ENCODE measurements at regions of chr20 and their contacts with region 1.

Region 1: GRCh38 chr20:36460648-36461599 is 80.4 kb upstream of the MYL9 start:
- DNase-seq: peak; percentile 92 to 96 (median 95)
- ATAC-seq: peak; percentile 64 to 77 (median 74)
- H3K4me3 ChIP-seq: peak overlapping the region in 11 of 12 donors; percentile 72 to 99 (median 89)
- H3K27ac ChIP-seq: peak overlapping the region; percentile 93 to 100 (median 98)
- H3K4me1 ChIP-seq: peaks cover 7 to 46% (median 37%) of the 10 kb centered on the region in 12 donors
- H3K27me3 ChIP-seq: no peaks in the 10 kb centered on the region
- CTCF ChIP-seq: peak in 2 of 12 donors; percentile 31 to 37
- POLR2A ChIP-seq: peak; percentile 98

Region 2: GRCh38 chr20:36145877-36146707 is 314.8 kb before region 1 on chr20:
- intact Hi-C with region 1: no loop called
- DNase-seq: peak; percentile 68 to 87 (median 71)
- ATAC-seq: peak; percentile 84 to 87 (median 86)
- H3K4me3 ChIP-seq: no peak overlapping the region
- H3K27ac ChIP-seq: peak overlapping the region in 11 of 12 donors; percentile 50 to 85 (median 70)
- H3K4me1 ChIP-seq: peaks cover 0 to 60% (median 24%) of the 10 kb centered on the region in 12 donors
- H3K27me3 ChIP-seq: no peaks in the 10 kb centered on the region
- CTCF ChIP-seq: no peak
- POLR2A ChIP-seq: no peak

Region 3: DNA sequence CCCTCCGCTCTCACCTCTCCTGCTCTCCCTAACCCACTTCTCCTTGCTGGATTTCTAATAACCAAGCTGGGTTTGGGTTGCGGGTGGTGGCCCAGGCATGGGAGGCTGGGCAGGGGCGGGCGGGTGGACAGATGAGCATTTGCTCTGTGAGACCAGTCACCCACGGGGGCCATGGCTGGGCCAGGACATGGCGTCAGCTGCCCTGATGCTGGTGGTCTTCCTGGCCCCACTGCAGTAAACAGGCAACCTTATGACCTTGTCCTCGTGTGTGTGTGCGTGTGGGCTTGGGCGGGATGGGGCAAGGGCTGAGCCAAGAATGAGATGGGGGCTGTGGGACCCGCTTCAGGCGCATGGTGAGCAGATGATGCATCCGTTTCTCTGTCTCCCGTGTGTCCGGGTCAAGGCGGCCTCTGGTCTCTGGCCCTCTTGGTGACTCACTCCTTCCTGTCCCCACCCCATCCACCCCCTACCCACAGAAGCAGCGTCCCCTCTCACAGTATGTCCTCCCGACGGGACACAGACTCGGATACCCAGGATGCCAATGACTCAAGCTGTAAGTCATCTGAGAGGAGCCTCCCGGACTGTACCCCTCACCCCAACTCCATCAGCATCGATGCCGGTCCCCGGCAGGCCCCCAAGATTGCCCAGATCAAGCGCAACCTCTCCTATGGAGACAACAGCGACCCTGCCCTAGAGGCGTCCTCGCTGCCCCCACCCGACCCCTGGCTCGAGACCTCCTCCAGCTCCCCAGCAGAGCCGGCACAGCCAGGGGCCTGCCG is 39.0 kb after region 1 on chr20:
- intact Hi-C with region 1: loop called in 2 of 10 experiments (anchors 5 kb)
- DNase-seq: no peak
- ATAC-seq: no peak
- H3K4me3 ChIP-seq: no peak overlapping the region
- H3K27ac ChIP-seq: peak overlapping the region in 2 of 12 donors; percentile 86 to 91
- H3K4me1 ChIP-seq: peaks cover 0 to 49% (median 20%) of the 10 kb centered on the region in 12 donors
- H3K27me3 ChIP-seq: no peaks in the 10 kb centered on the region
- CTCF ChIP-seq: no peak
- POLR2A ChIP-seq: no peak

Region 4: GRCh38 chr20:36541227-36541763 is 80.4 kb after region 1 on chr20 and contains the start of gene MYL9:
- intact Hi-C with region 1: loop called in 9 of 10 experiments (anchors 1 to 5 kb)
- DNase-seq: peak; percentile 95 to 98 (median 96)
- ATAC-seq: peak; percentile 66 to 88 (median 81)
- H3K4me3 ChIP-seq: peak within 1 kb of the TSS; percentile 71 to 100 (median 92)
- H3K27ac ChIP-seq: peak within 1 kb of the TSS; percentile 88 to 100 (median 98)
- H3K4me1 ChIP-seq: peaks cover 5 to 74% (median 52%) of the 10 kb centered on the region in 12 donors
- H3K27me3 ChIP-seq: no peaks in the 10 kb centered on the region
- CTCF ChIP-seq: no peak
- POLR2A ChIP-seq: peak in 1 of 2 donors; percentile 62
- total RNA-seq, gene MYL9: 521 to 2,387 (median 1,751) TPM

Region 5: DNA sequence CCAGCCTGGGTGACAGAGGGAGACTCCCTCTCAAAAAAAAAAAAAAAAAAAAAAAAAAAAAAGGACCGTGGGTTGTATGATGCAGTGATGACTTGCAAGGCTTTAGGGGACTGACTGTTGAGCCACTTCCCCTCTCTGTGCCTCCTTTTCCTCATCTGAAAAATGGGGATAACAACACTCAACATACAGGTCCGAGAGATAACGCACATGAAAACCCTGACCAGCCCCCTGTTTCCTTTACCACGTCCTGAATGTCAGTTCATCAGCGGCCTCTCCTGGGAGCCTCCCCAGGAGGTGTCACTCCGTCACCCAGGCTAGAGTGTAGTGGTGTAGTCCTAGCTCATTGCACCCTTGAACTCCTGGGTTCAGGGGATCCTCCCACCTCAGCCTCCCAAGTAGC is 181.2 kb after region 1 on chr20:
- intact Hi-C with region 1: no loop called
- DNase-seq: no peak
- ATAC-seq: no peak
- H3K4me3 ChIP-seq: no peak overlapping the region
- H3K27ac ChIP-seq: no peak overlapping the region
- H3K4me1 ChIP-seq: peaks cover 0 to 11% (median 0%) of the 10 kb centered on the region in 12 donors
- H3K27me3 ChIP-seq: no peaks in the 10 kb centered on the region
- CTCF ChIP-seq: no peak
- POLR2A ChIP-seq: no peak